IMR-90 (cell line): ENCODE measurements at regions of chrX and their contacts with region 1.

Region 1: DNA sequence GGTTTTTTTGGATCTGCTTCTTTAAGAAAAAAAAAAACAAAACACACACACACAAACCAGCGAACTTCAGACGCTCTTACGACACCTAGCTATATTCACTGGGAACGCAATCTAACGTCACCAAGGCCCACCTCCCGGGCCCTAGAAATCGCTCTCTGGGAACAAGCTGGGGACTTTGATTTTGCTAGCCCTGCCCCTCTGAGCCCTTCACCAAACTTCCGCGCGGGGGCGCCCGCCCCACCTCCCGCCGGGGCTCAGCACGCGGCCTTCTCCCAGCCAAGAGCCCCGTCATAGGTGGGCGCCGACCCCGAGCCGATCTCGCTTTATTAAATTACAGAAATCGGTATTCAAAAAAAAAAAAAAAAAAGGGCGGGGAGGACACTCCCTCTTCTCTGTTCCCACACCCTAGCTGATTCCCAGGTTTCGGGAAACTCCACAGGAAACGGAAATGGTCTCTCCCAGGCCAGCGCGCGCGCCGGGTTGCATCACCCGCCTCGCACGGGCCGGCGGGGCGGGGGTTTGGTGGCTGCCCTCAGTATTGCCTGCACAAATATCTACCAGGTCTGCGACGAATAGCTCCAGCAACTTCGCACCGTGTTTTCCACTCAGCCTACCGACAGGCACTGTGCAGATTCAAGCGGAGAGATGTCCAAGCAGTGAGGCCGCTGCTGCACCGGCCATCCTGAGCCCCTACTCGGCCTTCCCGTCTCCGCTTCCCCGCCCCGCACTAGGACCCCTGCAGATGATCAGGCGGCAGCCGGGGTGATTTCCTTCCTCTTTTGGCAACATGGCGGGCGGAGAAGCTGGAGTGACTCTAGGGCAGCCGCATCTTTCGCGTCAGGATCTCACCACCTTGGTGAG is at the start of gene EIF2S3:
- DNase-seq: peak; percentile 98
- ATAC-seq: peak; percentile 93
- H3K4me3 ChIP-seq: peak within 1 kb of the TSS; percentile 78
- H3K27ac ChIP-seq: peak within 1 kb of the TSS; percentile 96
- H3K4me1 ChIP-seq: no peaks in the 10 kb centered on the region
- H3K27me3 ChIP-seq: no peaks in the 10 kb centered on the region
- CTCF ChIP-seq: peak; percentile 73
- POLR2A ChIP-seq: peak; percentile 88
- RAD21 ChIP-seq: peak; percentile 34
- total RNA-seq, gene EIF2S3: 416 and 419 TPM in 2 replicates

Region 2: GRCh38 chrX:23694606-23695005 is 359.8 kb before region 1 on chrX:
- CTCF ChIA-PET with region 1: no interaction called
- POLR2A ChIA-PET with region 1: no interaction called
- dilution Hi-C with region 1: no loop called
- in situ Hi-C with region 1: no loop called
- intact Hi-C with region 1: loop called (anchors 10 kb)
- DNase-seq: peak; percentile 57
- ATAC-seq: peak; percentile 96
- H3K4me3 ChIP-seq: no peak overlapping the region
- H3K27ac ChIP-seq: no peak overlapping the region
- H3K4me1 ChIP-seq: no peaks in the 10 kb centered on the region
- H3K27me3 ChIP-seq: no peaks in the 10 kb centered on the region
- CTCF ChIP-seq: peak; percentile 61
- POLR2A ChIP-seq: no peak
- RAD21 ChIP-seq: peak; percentile 66

Region 3: GRCh38 chrX:23699636-23700194 is 354.7 kb before region 1 on chrX:
- CTCF ChIA-PET with region 1: no interaction called
- POLR2A ChIA-PET with region 1: no interaction called
- dilution Hi-C with region 1: no loop called
- in situ Hi-C with region 1: loop called (anchors 25 kb)
- intact Hi-C with region 1: loop called (anchors 10 kb)
- DNase-seq: peak; percentile 14
- ATAC-seq: no peak
- H3K4me3 ChIP-seq: no peak overlapping the region
- H3K27ac ChIP-seq: no peak overlapping the region
- H3K4me1 ChIP-seq: no peaks in the 10 kb centered on the region
- H3K27me3 ChIP-seq: no peaks in the 10 kb centered on the region
- CTCF ChIP-seq: no peak
- POLR2A ChIP-seq: no peak
- RAD21 ChIP-seq: no peak

Region 4: DNA sequence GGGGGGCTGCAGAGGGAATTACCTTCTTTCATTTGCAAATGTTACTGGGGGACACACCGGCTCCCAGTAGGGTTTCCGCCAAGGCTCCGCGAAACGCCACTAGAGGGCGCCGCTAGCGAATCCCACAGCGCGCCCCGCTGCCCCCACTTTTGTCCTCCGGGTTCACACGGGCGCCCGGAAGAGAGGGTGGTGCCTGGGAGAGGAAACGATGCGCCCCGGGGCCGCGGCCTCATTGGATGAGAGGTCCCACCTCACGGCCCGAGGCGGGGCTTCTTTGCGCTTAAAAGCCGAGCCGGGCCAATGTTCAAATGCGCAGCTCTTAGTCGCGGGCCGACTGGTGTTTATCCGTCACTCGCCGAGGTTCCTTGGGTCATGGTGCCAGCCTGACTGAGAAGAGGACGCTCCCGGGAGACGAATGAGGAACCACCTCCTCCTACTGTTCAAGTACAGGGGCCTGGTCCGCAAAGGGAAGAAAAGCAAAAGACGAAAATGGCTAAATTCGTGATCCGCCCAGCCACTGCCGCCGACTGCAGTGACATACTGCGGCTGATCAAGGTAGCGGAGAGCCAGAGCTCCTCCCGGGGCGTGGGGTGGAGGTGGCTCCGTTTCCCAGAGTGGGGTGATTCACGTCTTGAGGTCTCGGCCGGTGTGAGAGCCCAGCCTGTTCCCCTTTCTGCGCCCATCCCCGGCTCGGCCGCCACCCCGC is 271.4 kb before region 1 on chrX and contains the start of gene SAT1:
- CTCF ChIA-PET with region 1: no interaction called
- POLR2A ChIA-PET with region 1: no interaction called
- dilution Hi-C with region 1: no loop called
- in situ Hi-C with region 1: no loop called
- intact Hi-C with region 1: loop called (anchors 5 kb)
- DNase-seq: peak; percentile 91
- ATAC-seq: peak; percentile 92
- H3K4me3 ChIP-seq: peak within 1 kb of the TSS; percentile 74
- H3K27ac ChIP-seq: peak within 1 kb of the TSS; percentile 78
- H3K4me1 ChIP-seq: no peaks in the 10 kb centered on the region; the same call in 1 of the 2 replicates
- H3K27me3 ChIP-seq: no peaks in the 10 kb centered on the region
- CTCF ChIP-seq: peak; percentile 69
- POLR2A ChIP-seq: peak; percentile 100
- RAD21 ChIP-seq: peak; percentile 58
- total RNA-seq, gene SAT1: 55.9 and 112 TPM in 2 replicates

Region 5: GRCh38 chrX:23797371-23798128 is 256.9 kb before region 1 on chrX:
- CTCF ChIA-PET with region 1: no interaction called
- POLR2A ChIA-PET with region 1: no interaction called
- dilution Hi-C with region 1: no loop called
- in situ Hi-C with region 1: no loop called
- intact Hi-C with region 1: no loop called
- DNase-seq: no peak
- ATAC-seq: no peak
- H3K4me3 ChIP-seq: no peak overlapping the region
- H3K27ac ChIP-seq: no peak overlapping the region
- H3K4me1 ChIP-seq: no peaks in the 10 kb centered on the region; the same call in 1 of the 2 replicates
- H3K27me3 ChIP-seq: peaks cover 2% of the 10 kb centered on the region; the same call in 1 of the 2 replicates
- CTCF ChIP-seq: no peak
- POLR2A ChIP-seq: no peak
- RAD21 ChIP-seq: no peak

Region 6: DNA sequence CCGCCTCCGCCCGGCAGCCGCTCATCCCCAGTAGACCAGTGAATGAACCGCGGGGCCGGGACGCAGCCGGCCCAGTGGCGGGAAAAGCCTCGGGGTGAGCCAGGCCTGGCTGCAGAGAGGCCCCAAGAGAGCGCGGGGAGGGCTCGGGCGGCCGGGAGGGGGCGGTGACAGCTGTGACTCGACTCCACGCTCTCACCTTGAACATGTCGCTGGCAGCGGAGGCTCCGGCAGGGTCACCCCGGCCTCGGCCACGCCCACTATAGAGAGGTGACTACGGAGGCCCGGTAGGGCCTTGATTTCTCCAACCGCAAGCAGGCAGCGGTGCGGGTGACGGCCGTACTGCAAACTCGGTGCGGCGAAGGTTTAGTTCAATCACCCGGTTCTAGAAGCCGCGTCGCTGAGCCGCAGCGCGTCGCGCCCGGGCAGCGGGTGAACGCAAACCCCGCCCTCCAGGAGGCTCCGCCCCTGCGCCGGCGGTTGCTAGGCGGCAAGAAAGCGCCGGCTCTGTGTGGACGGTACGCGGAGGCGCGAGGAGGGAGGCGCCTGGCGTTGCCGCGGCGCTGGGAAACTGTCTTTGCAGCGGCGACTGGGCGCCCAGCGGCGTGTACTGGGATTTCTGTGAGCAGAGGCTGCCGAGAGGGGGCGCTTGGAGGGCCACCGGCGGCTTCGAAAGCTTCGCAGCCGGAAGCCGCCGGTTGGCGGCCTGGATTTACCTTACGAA is 146.8 kb before region 1 on chrX and contains the starts of genes APOO and CXorf58:
- CTCF ChIA-PET with region 1: interaction called, 7 read pairs
- POLR2A ChIA-PET with region 1: no interaction called
- dilution Hi-C with region 1: no loop called
- in situ Hi-C with region 1: no loop called
- intact Hi-C with region 1: loop called (anchors 1 kb)
- DNase-seq: peak; percentile 87
- ATAC-seq: peak; percentile 97
- H3K4me3 ChIP-seq: peak within 1 kb of the TSS; percentile 52
- H3K27ac ChIP-seq: peak within 1 kb of the TSS; percentile 76
- H3K4me1 ChIP-seq: no peaks in the 10 kb centered on the region
- H3K27me3 ChIP-seq: no peaks in the 10 kb centered on the region
- CTCF ChIP-seq: peak; percentile 85
- POLR2A ChIP-seq: no peak
- RAD21 ChIP-seq: peak; percentile 52
- total RNA-seq, gene APOO: 9.0 and 11.4 TPM in 2 replicates
- total RNA-seq, gene CXorf58: not detected in 2 replicates

Region 7: DNA sequence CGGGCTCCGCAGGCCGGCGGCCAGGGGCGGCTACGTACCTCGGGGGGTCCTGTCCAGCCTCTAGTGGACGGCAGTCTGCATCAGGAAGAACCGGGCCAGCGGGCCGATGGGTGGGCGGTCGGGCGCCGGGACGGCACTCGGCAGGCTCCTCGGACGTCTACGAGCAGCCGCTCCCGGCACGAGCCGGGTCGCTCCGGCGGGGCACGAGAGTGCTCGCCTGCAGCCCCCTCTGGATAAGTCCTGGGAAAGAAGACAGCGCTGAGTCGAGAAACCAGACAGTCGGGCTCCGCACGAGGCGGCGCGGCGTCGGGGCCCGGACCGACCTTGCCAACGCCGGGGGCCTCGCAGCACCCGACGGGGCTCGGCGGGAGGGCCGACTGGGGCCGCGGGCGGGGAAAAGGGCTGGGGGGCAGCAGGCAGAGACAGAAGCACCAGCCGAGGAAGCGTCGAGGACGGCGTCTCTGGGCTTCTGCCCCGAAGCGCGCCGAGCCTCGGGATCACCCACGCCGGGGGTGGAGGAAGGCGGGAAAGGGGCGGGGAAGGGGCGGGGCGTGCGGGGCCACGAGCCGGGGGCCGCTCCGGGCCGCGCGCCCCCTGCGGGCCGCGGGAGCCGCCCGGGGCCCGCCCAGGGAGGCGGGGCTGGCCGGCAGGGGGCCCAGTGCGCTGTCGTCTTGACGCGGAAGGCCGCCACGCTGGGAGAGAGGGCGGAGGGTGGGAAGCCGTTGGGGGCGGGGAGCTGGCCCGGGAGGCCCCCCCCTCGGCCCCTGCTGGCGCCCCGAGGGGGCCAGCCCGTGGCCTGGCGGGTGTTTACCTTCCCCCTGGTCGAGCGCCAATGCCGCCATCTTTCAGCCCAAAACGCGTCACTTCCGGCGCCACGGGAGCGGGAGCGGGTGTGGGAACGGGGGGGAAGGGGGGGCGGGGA is 29.3 kb before region 1 on chrX:
- CTCF ChIA-PET with region 1: interaction called, 12 read pairs
- POLR2A ChIA-PET with region 1: interaction called, 13 read pairs
- dilution Hi-C with region 1: no loop called
- in situ Hi-C with region 1: no loop called
- intact Hi-C with region 1: loop called (anchors 1 kb)
- DNase-seq: peak; percentile 89
- ATAC-seq: peak; percentile 93
- H3K4me3 ChIP-seq: peak overlapping the region; percentile 99
- H3K27ac ChIP-seq: peak overlapping the region; percentile 70
- H3K4me1 ChIP-seq: no peaks in the 10 kb centered on the region
- H3K27me3 ChIP-seq: no peaks in the 10 kb centered on the region; the same call in none of the 2 replicates
- CTCF ChIP-seq: peak; percentile 53
- POLR2A ChIP-seq: peak; percentile 94
- RAD21 ChIP-seq: no peak

Region 8: DNA sequence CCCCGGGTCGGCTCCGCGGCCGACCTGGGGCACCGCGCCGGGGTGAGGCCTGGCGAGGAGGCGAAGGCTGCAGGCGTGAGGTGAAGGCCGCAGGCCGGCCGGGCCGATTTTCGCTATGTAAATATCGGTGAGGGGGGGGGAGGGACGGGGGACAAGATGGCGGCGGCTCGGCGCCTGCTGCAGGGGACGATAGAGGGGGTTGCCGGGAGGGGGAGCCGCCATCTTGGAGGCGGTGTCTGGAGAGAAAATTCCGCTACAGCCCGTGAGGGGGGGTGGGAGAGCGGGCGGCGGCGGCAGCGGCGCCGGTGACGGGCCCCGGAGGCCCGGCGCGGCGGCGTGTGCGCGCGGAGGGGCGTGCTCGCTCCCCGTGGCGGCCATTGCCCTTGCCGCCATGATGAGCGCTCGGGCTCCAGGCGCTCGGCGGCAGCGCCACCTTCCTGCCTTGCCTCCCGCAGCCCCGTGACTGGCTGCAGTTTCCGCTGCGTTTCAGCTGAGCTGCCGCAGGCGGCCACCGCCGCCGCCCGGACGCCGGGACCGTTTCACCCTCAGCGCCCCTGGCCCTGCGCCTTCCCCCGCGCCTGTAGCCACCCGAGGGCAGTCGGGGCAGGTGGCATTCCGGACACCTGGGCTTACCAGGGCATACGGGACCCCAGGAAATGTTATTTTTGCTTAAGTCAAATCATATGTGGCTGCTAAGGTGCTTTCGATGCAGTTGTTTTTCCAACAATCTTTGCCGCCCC is 95.8 kb after region 1 on chrX:
- CTCF ChIA-PET with region 1: no interaction called
- POLR2A ChIA-PET with region 1: no interaction called
- dilution Hi-C with region 1: no loop called
- in situ Hi-C with region 1: no loop called
- intact Hi-C with region 1: loop called (anchors 1 kb)
- DNase-seq: peak; percentile 92
- ATAC-seq: peak; percentile 79
- H3K4me3 ChIP-seq: peak overlapping the region; percentile 98
- H3K27ac ChIP-seq: peak overlapping the region; percentile 100
- H3K4me1 ChIP-seq: peaks cover 8% of the 10 kb centered on the region
- H3K27me3 ChIP-seq: no peaks in the 10 kb centered on the region
- CTCF ChIP-seq: peak; percentile 61
- POLR2A ChIP-seq: peak; percentile 59
- RAD21 ChIP-seq: peak; percentile 45